Common myeloid progenitor, CD34-positive (primary cell): ENCODE measurements at regions of chr16 and their contacts with region 1.

Region 1: GRCh38 chr16:25224731-25225319 is 8.1 kb downstream of the AQP8 start:
- DNase-seq: no peak
- H3K4me3 ChIP-seq: no peak overlapping the region
- H3K27ac ChIP-seq: no peak overlapping the region
- H3K4me1 ChIP-seq: peaks cover 0 to 4% (median 3%) of the 10 kb centered on the region in 4 experiments
- H3K27me3 ChIP-seq: no peaks in the 10 kb centered on the region

Region 2: GRCh38 chr16:25126820-25127232 is 98.0 kb before region 1 on chr16:
- CTCF ChIA-PET with region 1: interaction called, 23 read pairs
- POLR2A ChIA-PET with region 1: no interaction called
- DNase-seq: peak; percentile 62 to 81 (median 77)
- H3K4me3 ChIP-seq: no peak overlapping the region
- H3K27ac ChIP-seq: no peak overlapping the region
- H3K4me1 ChIP-seq: peaks cover 0 to 3% (median 1%) of the 10 kb centered on the region in 4 experiments
- H3K27me3 ChIP-seq: no peaks in the 10 kb centered on the region

Region 3: DNA sequence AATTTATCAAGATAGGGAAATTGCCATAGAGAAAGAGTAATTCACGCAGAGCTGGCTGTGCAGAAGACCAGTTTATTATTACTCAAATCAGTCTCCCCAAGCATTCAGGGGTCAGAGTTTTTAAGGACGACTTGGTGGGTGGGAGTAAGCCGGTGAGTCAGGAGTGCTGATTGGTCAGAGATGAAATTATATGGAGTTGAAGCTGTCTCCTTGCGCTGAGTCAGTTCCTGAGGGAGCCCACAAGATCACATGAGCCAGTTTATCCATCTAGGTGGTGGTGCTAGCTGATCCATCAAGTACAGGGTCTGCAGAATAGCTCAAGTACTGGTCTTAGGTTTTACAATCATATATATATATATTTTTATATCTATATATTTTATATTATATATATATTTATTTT is 14.1 kb before region 1 on chr16:
- CTCF ChIA-PET with region 1: interaction called, 19 read pairs
- POLR2A ChIA-PET with region 1: no interaction called
- DNase-seq: peak; percentile 80 to 92 (median 89)
- H3K4me3 ChIP-seq: peak overlapping the region in 3 of 7 experiments; percentile 11 to 42 (median 16)
- H3K27ac ChIP-seq: no peak overlapping the region
- H3K4me1 ChIP-seq: peaks cover 0 to 11% (median 6%) of the 10 kb centered on the region in 4 experiments
- H3K27me3 ChIP-seq: no peaks in the 10 kb centered on the region